Heart left ventricle (tissue), 16 donors: ENCODE measurements at regions of chr4 and their contacts with region 1.

Region 1: GRCh38 chr4:83012687-83013419 is 2.2 kb upstream of the LIN54 start:
- DNase-seq: peak; percentile 97 to 99 (median 98)
- ATAC-seq: peak; percentile 98 to 99 (median 98)
- H3K4me3 ChIP-seq: peak overlapping the region; percentile 43 to 94 (median 73)
- H3K27ac ChIP-seq: peak overlapping the region; percentile 62 to 95 (median 80)
- H3K4me1 ChIP-seq: peaks cover 0 to 41% (median 23%) of the 10 kb centered on the region in 12 donors
- H3K27me3 ChIP-seq: no peaks in the 10 kb centered on the region
- CTCF ChIP-seq: peak in 11 of 12 donors; percentile 37 to 67 (median 54)
- POLR2A ChIP-seq: peak in 1 of 2 donors; percentile 49

Region 2: DNA sequence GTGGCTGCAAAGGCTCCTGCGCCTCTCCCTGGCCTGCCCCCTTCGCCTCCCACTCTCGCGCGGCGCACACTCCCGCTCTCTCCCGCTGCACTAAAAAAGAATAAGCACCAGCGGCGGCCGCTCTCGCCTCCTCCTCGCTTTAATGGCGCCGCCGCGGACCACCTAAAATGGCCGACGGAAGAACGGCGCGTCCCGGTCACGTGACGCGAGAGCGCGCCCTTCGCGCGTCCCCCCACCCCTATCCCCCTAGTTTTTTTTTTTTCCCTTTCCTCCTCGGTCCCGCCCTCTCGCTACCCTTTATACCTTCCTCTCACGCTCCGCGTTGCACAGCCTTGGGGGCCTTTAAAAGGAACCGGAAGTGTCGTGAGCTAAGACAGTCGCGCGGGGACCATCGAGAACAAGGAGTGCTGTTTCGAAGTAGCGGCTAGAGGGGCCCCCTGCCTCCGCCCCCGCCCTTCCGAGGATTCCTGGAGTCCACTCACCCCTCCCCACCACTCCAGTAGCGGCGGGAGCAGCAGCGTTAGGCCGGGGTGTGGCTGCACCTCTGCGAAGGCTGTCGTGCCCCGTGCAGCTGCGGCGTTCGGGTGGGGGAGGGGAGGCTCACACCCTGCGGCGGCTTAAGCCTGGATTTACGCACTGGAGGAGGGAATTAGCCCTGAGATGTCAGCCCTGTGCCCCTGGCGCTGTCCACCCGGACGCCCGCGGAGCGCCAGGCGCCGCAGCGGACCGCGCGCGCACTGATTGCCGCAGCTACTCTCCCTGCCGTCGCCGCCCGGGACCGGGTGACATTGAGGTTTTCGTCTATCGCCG is 638.8 kb before region 1 on chr4 and contains the start of gene HNRNPD:
- intact Hi-C with region 1: loop called in 1 of 10 experiments (anchors 5 kb)
- DNase-seq: peak; percentile 98 to 99 (median 98)
- ATAC-seq: peak; percentile 92 to 97 (median 96)
- H3K4me3 ChIP-seq: peak within 1 kb of the TSS; percentile 73 to 99 (median 94)
- H3K27ac ChIP-seq: peak within 1 kb of the TSS; percentile 94 to 100 (median 99)
- H3K4me1 ChIP-seq: peaks cover 12 to 48% (median 34%) of the 10 kb centered on the region in 12 donors
- H3K27me3 ChIP-seq: no peaks in the 10 kb centered on the region
- CTCF ChIP-seq: peak in 1 of 12 donors; percentile 30
- POLR2A ChIP-seq: peak; percentile 3 to 90
- total RNA-seq, gene HNRNPD: 33.8 to 150 (median 122) TPM

Region 3: DNA sequence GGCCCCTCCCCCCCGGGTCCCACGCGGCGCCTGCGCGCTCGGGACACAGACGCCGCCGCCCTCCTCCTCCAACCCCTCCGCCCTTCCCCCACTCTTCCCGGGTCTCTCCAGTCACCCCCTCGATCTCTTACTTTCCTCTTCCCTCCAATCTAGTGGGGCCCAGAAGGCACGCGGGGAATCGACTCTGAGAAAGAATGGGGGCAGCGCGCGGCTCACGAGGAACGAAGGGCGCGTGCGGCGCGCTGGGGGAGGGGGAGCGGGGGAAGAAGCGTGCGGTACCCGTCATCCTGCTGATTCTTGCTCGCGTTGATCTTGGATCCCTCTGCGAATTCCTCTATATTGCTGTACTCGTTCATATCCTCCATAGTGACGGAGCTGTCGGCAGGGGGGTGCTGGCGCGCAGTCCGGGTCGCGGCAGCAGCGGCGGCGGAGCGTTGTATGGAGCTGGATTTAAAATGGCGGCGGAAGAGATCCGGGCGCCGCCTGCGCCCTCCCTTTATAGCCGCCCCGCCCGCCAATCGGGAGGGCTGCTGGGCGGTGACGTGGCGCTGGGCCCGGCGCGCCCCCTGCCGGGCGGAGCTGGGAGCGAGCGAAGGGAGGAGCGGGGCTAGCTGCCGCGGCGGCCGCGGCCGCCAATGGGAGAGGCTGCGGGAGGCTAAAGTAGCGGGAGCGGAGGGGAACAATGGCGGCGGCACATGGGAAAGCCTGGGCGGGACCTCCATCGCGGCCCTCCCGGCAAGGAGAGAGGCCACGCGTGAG is 583.7 kb before region 1 on chr4:
- intact Hi-C with region 1: loop called in 2 of 10 experiments (anchors 5 to 10 kb)
- DNase-seq: peak; percentile 93 to 97 (median 93)
- ATAC-seq: peak; percentile 76 to 86 (median 85)
- H3K4me3 ChIP-seq: peak overlapping the region; percentile 63 to 99 (median 90)
- H3K27ac ChIP-seq: peak overlapping the region; percentile 91 to 100 (median 98)
- H3K4me1 ChIP-seq: peaks cover 0 to 60% (median 31%) of the 10 kb centered on the region in 12 donors
- H3K27me3 ChIP-seq: no peaks in the 10 kb centered on the region
- CTCF ChIP-seq: peak; percentile 90 to 100 (median 98)
- POLR2A ChIP-seq: peak in 1 of 2 donors; percentile 69

Region 4: DNA sequence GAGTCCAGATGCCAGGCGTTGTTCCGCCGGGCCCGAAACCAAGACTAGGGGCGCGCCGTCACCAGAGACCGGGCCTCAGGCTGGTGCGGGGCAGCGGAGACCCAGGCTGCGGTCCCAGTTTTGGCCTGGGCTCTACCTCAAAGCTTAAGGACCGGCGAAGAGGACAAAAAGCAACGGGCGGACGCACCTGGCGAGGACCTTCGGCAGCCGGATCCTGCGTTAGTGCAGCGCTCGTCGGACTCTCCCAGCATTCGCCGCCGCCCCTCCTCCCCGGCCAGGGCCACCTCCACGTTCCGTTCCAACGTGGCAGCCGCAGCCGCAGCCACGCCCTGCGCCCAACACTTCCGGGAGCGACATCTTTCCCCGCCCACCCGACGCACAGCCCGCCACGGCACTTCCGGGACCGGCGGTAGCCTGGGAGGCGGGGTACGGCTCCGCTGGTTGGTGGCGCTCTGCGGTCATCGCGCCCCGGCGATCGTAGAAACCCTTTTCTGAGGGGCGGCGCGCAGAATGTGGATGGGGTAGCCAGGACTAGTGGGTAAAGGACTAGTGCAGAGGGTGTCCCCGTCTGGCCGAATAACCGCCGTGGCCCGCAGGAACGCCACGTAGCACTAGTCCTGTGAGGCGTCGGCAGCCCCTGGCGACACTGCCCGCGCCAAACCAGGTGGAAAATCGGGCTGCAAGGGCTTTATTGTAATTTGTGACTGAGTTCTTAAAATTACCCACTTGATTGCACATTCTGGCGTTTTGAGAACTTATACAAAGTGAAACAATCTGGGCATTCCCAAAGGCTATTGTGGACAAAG is 121.7 kb before region 1 on chr4 and contains the start of gene SEC31A:
- intact Hi-C with region 1: loop called in 1 of 10 experiments (anchors 10 kb)
- DNase-seq: peak; percentile 97 to 99 (median 98)
- ATAC-seq: peak; percentile 98 to 99 (median 98)
- H3K4me3 ChIP-seq: peak within 1 kb of the TSS; percentile 69 to 98 (median 82)
- H3K27ac ChIP-seq: peak within 1 kb of the TSS; percentile 85 to 99 (median 96)
- H3K4me1 ChIP-seq: peaks cover 0 to 39% (median 33%) of the 10 kb centered on the region in 12 donors
- H3K27me3 ChIP-seq: no peaks in the 10 kb centered on the region
- CTCF ChIP-seq: peak in 4 of 12 donors; percentile 7 to 35 (median 26)
- POLR2A ChIP-seq: peak in 1 of 2 donors; percentile 88
- total RNA-seq, gene SEC31A: 81.0 to 168 (median 101) TPM

Region 5: GRCh38 chr4:82900331-82901128 is 112.3 kb before region 1 on chr4 and contains the start of gene THAP9:
- intact Hi-C with region 1: loop called in 8 of 10 experiments (anchors 2 to 10 kb)
- DNase-seq: peak; percentile 98 to 99 (median 99)
- ATAC-seq: peak; percentile 97 to 99 (median 99)
- H3K4me3 ChIP-seq: peak within 1 kb of the TSS; percentile 42 to 85 (median 74)
- H3K27ac ChIP-seq: peak within 1 kb of the TSS; percentile 96 to 100 (median 99)
- H3K4me1 ChIP-seq: peaks cover 0 to 46% (median 33%) of the 10 kb centered on the region in 12 donors
- H3K27me3 ChIP-seq: no peaks in the 10 kb centered on the region
- CTCF ChIP-seq: no peak
- POLR2A ChIP-seq: peak in 1 of 2 donors; percentile 65
- total RNA-seq, gene THAP9: 3.1 to 7.7 (median 5.4) TPM

Region 6: GRCh38 chr4:82930848-82931755 is 81.8 kb before region 1 on chr4:
- intact Hi-C with region 1: no loop called
- DNase-seq: no peak
- ATAC-seq: no peak
- H3K4me3 ChIP-seq: no peak overlapping the region
- H3K27ac ChIP-seq: no peak overlapping the region
- H3K4me1 ChIP-seq: no peaks in the 10 kb centered on the region
- H3K27me3 ChIP-seq: no peaks in the 10 kb centered on the region
- CTCF ChIP-seq: no peak
- POLR2A ChIP-seq: no peak